CD4-positive, alpha-beta T cell (primary cell): ENCODE measurements at regions of chr17 and their contacts with region 1.

Region 1: DNA sequence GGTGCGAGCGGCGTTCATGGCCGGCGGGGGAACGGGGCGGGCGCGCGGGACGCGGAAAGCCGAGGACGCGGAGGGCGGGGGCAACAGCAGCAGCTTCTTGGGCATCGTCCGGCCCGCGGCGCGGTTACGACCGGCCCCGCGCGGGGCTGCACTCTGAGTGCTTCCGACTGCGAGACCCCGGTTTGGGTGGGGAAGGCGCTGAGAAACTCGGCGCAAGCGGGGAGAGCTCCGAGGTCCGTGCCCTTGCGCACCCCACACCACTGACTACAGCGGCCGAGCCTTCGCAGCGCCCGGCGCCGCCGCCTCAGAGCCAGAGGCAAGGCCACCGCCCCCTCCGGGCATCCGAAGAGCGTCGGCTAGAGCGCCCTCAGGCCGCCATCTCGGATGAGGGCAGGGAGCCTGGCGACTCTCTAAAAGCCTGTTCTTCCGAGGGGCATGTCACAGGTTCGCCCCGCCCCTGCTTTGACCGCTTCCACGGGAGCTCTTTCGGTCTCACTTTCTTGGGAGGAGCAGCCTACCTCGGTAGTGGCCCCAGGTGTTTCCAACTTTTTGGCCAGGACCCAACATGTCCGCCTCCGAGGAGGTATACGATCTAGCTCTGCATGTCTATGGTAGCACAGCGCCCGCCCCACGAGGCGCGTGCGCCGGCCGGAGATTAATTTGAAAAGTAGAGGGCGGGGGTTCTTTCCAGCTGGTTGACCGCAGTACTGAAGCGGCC is at the start of gene PRPSAP1:
- DNase-seq: peak; percentile 62 to 93 (median 74)
- ATAC-seq: peak; percentile 95
- H3K4me3 ChIP-seq: peak within 1 kb of the TSS; percentile 83
- H3K4me3 Mint-ChIP-seq: peak within 1 kb of the TSS; percentile 98
- H3K27ac ChIP-seq: peak within 1 kb of the TSS; percentile 29 to 92
- H3K27ac Mint-ChIP-seq: peak within 1 kb of the TSS; percentile 90
- H3K4me1 ChIP-seq: peaks cover 21% of the 10 kb centered on the region
- H3K4me1 Mint-ChIP-seq: peaks cover 21% of the 10 kb centered on the region
- H3K27me3 ChIP-seq: no peaks in the 10 kb centered on the region
- H3K27me3 Mint-ChIP-seq: no peaks in the 10 kb centered on the region
- CTCF ChIP-seq: peak; percentile 18
- total RNA-seq, gene PRPSAP1: 10.8 to 12.1 TPM

Region 2: DNA sequence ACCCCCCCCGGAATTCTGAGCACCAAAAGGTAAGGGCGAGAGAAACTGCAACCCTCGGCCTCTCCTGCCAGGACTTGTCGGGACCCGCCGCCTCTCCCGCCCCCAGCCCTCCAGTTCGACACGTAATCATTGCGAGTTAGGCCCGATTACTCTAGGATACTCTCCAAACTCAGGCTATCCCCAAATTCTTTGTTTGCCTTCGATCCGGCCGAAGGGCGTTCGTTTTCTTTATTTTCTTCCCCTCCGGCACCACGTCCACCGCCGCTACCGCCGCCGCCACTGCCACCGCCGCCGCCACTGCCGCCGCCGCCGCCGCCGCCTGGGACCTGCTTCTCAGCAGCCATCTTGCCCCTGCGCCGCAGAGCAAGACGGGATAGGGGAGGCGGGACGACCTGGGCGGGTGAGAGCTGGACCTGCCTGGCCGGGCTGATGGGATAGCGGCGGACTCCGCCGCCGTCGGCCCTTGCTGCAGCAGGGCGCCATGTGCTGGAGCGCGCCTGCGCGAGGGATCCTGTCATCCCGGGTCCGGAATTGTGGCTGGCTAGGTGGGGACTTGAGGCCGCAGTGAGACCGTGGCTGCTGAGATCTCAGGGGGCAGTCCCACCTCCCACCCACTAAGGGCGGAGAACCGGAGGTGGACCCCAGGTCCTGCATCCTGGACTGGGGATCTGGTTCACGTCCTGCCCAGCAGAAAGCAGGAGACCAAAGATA is 281.5 kb before region 1 on chr17 and contains the start of gene SRP68:
- CTCF ChIA-PET with region 1: no interaction called
- POLR2A ChIA-PET with region 1: no interaction called
- intact Hi-C with region 1: loop called in 1 of 2 experiments (anchors 1 kb)
- DNase-seq: peak; percentile 66 to 92 (median 82)
- ATAC-seq: peak; percentile 79
- H3K4me3 ChIP-seq: peak within 1 kb of the TSS; percentile 99
- H3K4me3 Mint-ChIP-seq: peak within 1 kb of the TSS; percentile 95
- H3K27ac ChIP-seq: peak within 1 kb of the TSS; percentile 70 to 82
- H3K27ac Mint-ChIP-seq: peak within 1 kb of the TSS; percentile 91
- H3K4me1 ChIP-seq: peaks cover 64% of the 10 kb centered on the region
- H3K4me1 Mint-ChIP-seq: peaks cover 49% of the 10 kb centered on the region
- H3K27me3 ChIP-seq: peaks cover 29 to 32% of the 10 kb centered on the region in 2 experiments
- H3K27me3 Mint-ChIP-seq: peaks cover 35% of the 10 kb centered on the region
- CTCF ChIP-seq: no peak
- total RNA-seq, gene SRP68: 106 to 108 TPM

Region 3: DNA sequence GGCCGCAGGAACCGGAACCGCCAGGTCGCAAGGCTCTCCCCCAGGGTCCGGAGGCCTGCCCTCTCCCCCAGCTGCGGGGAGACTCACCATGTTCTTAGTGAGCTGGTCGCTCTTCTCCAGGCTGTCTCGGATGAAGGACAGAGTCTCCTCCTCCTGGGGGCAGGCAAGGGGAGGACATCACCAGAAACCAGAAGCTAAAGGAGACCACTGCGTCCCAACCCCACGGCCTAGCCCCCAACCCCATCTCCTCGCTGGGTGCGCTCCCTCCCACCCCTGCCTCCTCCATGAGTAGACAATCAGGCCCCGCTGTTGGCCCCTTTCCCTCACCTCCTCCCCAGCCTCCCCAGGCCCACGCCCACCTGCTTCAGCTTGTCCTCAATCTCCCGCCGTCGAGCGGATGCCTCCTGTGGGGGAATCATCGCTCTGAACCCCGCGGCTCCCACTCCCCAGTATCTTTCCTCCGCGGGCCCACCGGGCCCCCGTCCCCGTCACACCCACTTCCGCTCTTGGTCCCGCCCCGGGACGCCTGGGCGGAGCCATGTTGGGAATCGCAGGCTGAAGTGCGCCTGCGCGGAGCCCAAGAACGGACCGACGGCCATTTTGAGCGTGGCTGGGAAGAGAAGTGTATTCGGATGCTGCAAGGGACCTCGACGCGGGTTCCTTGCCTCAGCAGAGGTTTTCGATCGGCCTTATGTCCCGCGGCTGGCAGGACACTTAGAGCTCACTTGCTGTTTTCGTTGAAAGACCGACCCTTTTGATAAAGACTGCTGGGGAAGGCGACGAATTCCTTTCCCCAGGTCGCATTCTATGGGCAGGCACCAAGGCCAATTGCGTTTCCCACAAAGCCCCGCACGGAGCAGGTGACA is 250.3 kb before region 1 on chr17 and contains the start of gene EXOC7:
- CTCF ChIA-PET with region 1: no interaction called
- POLR2A ChIA-PET with region 1: interaction called, 3 read pairs
- intact Hi-C with region 1: loop called in 1 of 2 experiments (anchors 5 kb)
- DNase-seq: peak; percentile 86 to 97 (median 92)
- ATAC-seq: peak; percentile 94
- H3K4me3 ChIP-seq: peak within 1 kb of the TSS; percentile 85
- H3K4me3 Mint-ChIP-seq: peak within 1 kb of the TSS; percentile 98
- H3K27ac ChIP-seq: peak within 1 kb of the TSS; percentile 68 to 82
- H3K27ac Mint-ChIP-seq: peak within 1 kb of the TSS; percentile 90
- H3K4me1 ChIP-seq: peaks cover 32% of the 10 kb centered on the region
- H3K4me1 Mint-ChIP-seq: peaks cover 38% of the 10 kb centered on the region
- H3K27me3 ChIP-seq: no peaks in the 10 kb centered on the region
- H3K27me3 Mint-ChIP-seq: no peaks in the 10 kb centered on the region
- CTCF ChIP-seq: no peak
- total RNA-seq, gene EXOC7: 88.1 to 90.6 TPM

Region 4: DNA sequence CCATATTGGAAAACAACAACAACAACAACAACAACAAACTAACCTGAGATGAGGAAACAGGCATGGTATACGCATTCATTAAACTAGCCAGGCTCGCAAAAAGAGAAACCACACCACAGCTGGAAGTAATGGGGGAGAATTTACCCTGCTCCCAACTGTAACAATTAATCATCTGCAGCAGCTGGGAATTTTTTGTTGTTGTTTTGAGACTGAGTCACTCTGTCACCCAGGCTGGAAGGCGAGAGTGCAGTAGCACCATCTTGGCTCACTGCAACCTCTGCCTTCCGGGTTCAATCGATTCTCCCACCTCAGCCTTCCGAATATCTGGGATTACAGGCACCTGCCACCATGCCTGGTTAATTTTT is 16.4 kb before region 1 on chr17:
- CTCF ChIA-PET with region 1: no interaction called
- POLR2A ChIA-PET with region 1: no interaction called
- intact Hi-C with region 1: no loop called
- DNase-seq: no peak
- ATAC-seq: no peak
- H3K4me3 ChIP-seq: no peak overlapping the region
- H3K4me3 Mint-ChIP-seq: no peak overlapping the region
- H3K27ac ChIP-seq: no peak overlapping the region
- H3K27ac Mint-ChIP-seq: no peak overlapping the region
- H3K4me1 ChIP-seq: no peaks in the 10 kb centered on the region
- H3K4me1 Mint-ChIP-seq: no peaks in the 10 kb centered on the region
- H3K27me3 ChIP-seq: no peaks in the 10 kb centered on the region
- H3K27me3 Mint-ChIP-seq: no peaks in the 10 kb centered on the region
- CTCF ChIP-seq: no peak

Region 5: DNA sequence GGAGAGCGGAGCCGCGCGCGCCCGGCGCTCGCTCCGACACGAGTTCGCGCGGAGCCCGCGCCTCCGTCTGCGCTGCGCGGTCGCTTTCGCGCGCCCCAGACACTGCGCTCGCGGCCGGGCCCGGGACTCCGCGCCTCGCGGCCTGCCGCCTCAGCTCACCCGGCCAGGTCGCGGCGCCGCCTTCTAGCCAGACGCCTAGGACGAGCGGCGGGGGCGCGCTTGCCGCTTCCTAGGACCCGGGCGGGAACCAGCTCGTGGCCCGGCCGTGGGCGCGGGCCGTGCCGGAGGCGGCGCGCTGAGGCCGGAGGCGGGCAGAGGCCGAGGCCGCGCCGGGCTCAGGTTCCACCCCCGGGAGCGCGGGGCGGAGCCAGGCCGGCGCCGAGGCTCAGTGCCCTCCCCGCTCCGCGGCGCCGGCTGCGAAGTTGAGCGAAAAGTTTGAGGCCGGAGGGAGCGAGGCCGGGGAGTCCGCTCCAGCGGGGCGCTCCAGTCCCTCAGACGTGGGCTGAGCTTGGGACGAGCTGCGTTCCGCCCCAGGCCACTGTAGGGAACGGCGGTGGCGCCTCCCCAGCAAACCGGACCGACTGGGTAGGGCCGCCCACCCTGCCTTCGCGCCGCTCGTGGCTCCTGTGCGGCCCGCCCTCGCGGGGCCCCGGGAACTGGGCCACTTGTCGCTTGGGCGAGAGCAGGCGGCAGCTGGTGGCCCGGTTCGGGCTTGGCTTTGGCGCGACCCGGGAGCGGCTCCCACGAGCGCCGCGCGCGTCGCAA is 30.6 kb after region 1 on chr17 and contains the start of gene SPHK1:
- CTCF ChIA-PET with region 1: interaction called, 12 read pairs
- POLR2A ChIA-PET with region 1: interaction called, 37 read pairs
- intact Hi-C with region 1: loop called (anchors 2 to 5 kb)
- DNase-seq: peak in 12 of 14 experiments; percentile 23 to 80 (median 55)
- ATAC-seq: peak; percentile 40
- H3K4me3 ChIP-seq: peak within 1 kb of the TSS; percentile 62
- H3K4me3 Mint-ChIP-seq: peak within 1 kb of the TSS; percentile 92
- H3K27ac ChIP-seq: no peak within 1 kb of the TSS
- H3K27ac Mint-ChIP-seq: no peak within 1 kb of the TSS
- H3K4me1 ChIP-seq: peaks cover 33% of the 10 kb centered on the region
- H3K4me1 Mint-ChIP-seq: peaks cover 6% of the 10 kb centered on the region
- H3K27me3 ChIP-seq: peaks cover 4 to 7% of the 10 kb centered on the region in 2 experiments
- H3K27me3 Mint-ChIP-seq: peaks cover 4% of the 10 kb centered on the region
- CTCF ChIP-seq: no peak
- total RNA-seq, gene SPHK1: 0.45 to 1.1 TPM

Region 6: GRCh38 chr17:76397687-76398487 is 44.1 kb after region 1 on chr17:
- CTCF ChIA-PET with region 1: interaction called, 11 read pairs
- POLR2A ChIA-PET with region 1: interaction called, 9 read pairs
- intact Hi-C with region 1: no loop called
- DNase-seq: peak; percentile 76 to 90 (median 83)
- ATAC-seq: peak; percentile 92
- H3K4me3 ChIP-seq: no peak overlapping the region
- H3K4me3 Mint-ChIP-seq: no peak overlapping the region
- H3K27ac ChIP-seq: no peak overlapping the region
- H3K27ac Mint-ChIP-seq: no peak overlapping the region
- H3K4me1 ChIP-seq: no peaks in the 10 kb centered on the region
- H3K4me1 Mint-ChIP-seq: no peaks in the 10 kb centered on the region
- H3K27me3 ChIP-seq: no peaks in the 10 kb centered on the region
- H3K27me3 Mint-ChIP-seq: no peaks in the 10 kb centered on the region
- CTCF ChIP-seq: peak; percentile 94

Region 7: GRCh38 chr17:76452660-76453430 is 99.1 kb after region 1 on chr17 and contains the start of gene UBE2O:
- CTCF ChIA-PET with region 1: no interaction called
- POLR2A ChIA-PET with region 1: interaction called, 8 read pairs
- intact Hi-C with region 1: loop called in 1 of 2 experiments (anchors 5 kb)
- DNase-seq: peak; percentile 82 to 97 (median 92)
- ATAC-seq: peak; percentile 90
- H3K4me3 ChIP-seq: peak within 1 kb of the TSS; percentile 69
- H3K4me3 Mint-ChIP-seq: peak within 1 kb of the TSS; percentile 79
- H3K27ac ChIP-seq: peak within 1 kb of the TSS; percentile 50 to 65
- H3K27ac Mint-ChIP-seq: peak within 1 kb of the TSS; percentile 82
- H3K4me1 ChIP-seq: peaks cover 30% of the 10 kb centered on the region
- H3K4me1 Mint-ChIP-seq: peaks cover 45% of the 10 kb centered on the region
- H3K27me3 ChIP-seq: no peaks in the 10 kb centered on the region
- H3K27me3 Mint-ChIP-seq: no peaks in the 10 kb centered on the region
- CTCF ChIP-seq: peak; percentile 47
- total RNA-seq, gene UBE2O: 22.7 to 25.1 TPM